ENCODE measurements at regions of chrX and their contacts with region 1.

Region 1: DNA sequence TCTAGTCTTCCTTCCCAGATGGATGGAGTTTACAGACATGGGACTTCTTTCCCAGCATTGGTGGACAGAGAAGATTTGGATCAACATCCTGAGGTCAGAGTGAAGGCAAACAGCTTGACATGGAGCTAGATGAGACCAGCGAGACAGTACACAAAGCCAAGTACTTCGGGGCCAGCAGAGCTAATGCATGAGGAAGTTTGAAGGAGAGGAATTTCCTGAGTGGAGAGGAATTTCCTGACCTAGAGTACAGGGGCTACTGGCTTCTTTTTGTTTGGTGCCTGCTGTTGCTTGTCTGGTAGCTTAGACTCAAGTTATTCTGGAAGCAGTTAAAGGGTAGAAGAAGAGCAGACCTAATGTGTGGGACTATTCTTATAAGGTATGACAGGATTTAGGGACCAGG is 69.1 kb upstream of the EOLA2 start:
- DNase-seq: no peak
- H3K4me3 ChIP-seq: no peak overlapping the region
- CTCF ChIP-seq: no peak
- POLR2A ChIP-seq: no peak

Region 2: GRCh38 chrX:149040873-149041535 is 966.4 kb before region 1 on chrX:
- intact Hi-C with region 1: loop called (anchors 10 kb)
- DNase-seq: no peak
- H3K4me3 ChIP-seq: no peak overlapping the region
- CTCF ChIP-seq: no peak
- POLR2A ChIP-seq: no peak

Region 3: GRCh38 chrX:150291014-150291413 is 283.7 kb after region 1 on chrX:
- intact Hi-C with region 1: no loop called
- DNase-seq: peak in 1 of 2 donors; percentile 13
- H3K4me3 ChIP-seq: no peak overlapping the region
- CTCF ChIP-seq: no peak
- POLR2A ChIP-seq: no peak